RWPE1 (cell line): ENCODE measurements at regions of chr5 and their contacts with region 1.

Region 1: GRCh38 chr5:159936686-159937329 is 20.5 kb downstream of the ADRA1B start:
- DNase-seq: peak; percentile 81
- H3K27ac ChIP-seq: peak overlapping the region; percentile 72
- CTCF ChIP-seq: no peak

Region 2: GRCh38 chr5:158419186-158419585 is 1517.6 kb before region 1 on chr5:
- CTCF ChIA-PET with region 1: interaction called, 11 read pairs
- POLR2A ChIA-PET with region 1: no interaction called
- DNase-seq: no peak
- H3K27ac ChIP-seq: no peak overlapping the region
- CTCF ChIP-seq: no peak

Region 3: DNA sequence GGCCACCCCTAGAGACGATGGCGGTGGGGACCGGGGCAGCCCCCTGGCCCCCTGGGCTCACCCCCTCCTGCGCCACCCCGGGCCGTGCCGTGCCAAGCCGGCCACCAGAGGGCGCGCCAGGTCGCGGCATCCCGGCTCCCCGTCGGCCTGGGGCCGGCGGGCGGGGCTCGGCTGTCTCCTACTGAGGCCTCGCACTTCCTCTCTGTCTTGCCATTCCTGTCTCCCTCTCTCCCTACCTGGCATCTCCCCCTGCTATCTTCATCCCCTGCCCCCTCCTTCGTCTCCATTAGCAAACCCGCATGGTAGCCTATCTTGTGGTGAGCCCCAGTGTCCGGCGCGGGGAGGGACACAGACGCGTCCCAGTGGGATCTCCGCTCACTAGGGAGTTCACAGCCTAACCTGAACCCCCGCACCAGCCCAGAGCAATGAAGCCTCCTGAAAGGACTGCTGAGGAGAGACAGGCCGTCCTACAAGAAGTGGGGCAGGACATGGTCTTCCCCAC is 262.7 kb after region 1 on chr5:
- CTCF ChIA-PET with region 1: no interaction called
- POLR2A ChIA-PET with region 1: no interaction called
- DNase-seq: peak; percentile 86
- H3K27ac ChIP-seq: no peak overlapping the region
- CTCF ChIP-seq: peak; percentile 99